Activated CD4-positive, alpha-beta memory T cell treated with anti-CD3 and anti-CD28 coated beads for 36 hours (primary cell): ENCODE measurements at regions of chr1 and their contacts with region 1.

Region 1: DNA sequence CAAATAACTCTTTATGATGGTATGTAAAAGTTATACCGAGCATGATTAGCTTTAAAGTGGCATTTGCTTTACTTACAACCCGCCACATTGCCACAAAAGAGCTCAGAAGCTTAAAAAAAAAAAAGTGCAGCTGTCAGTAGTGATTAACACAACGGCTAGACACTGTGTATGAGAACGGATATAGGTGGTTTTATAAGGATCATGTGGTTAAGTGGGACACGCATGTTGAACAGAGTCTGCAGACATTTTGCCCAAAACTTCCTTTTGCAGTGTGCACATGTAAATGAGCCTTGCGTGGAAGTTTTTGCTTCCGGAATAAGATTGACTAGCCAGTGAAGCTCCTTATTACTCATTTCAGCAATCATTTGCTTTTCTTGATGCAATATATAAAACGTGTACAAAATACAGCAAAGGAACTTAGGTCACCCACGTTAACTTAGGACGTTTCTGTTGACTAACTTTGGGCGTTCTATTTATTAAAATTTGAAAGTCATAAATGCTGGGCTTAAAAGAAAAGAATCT is 58.7 kb upstream of the RGS1 start:
- DNase-seq: peak; percentile 71
- H3K4me3 Mint-ChIP-seq: peak overlapping the region; percentile 53
- H3K27ac Mint-ChIP-seq: peak overlapping the region; percentile 82
- H3K4me1 Mint-ChIP-seq: peaks cover 56% of the 10 kb centered on the region
- H3K27me3 Mint-ChIP-seq: no peaks in the 10 kb centered on the region

Region 2: DNA sequence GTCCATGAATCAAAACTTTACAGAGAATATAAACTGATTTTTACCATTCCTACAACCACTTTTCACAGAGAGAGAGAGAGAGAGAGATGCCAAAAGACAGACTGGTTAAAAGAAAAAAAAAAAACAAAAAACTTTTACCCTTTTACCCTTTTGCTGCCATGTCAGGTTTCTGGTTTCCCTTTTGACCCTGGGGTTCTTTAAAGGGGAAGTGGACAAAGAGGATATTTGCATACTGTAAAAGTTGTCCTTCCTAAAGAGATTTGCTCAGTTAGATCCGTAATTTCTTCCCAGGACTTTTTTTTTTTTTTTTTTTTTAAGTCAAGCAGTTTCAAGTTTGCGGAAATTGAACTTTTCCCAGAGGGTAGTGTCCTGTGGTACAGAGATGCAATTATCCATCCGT is 646.3 kb before region 1 on chr1:
- CTCF ChIA-PET with region 1: no interaction called
- POLR2A ChIA-PET with region 1: no interaction called
- intact Hi-C with region 1: no loop called
- DNase-seq: no peak
- H3K4me3 Mint-ChIP-seq: no peak overlapping the region
- H3K27ac Mint-ChIP-seq: no peak overlapping the region
- H3K4me1 Mint-ChIP-seq: no peaks in the 10 kb centered on the region
- H3K27me3 Mint-ChIP-seq: no peaks in the 10 kb centered on the region

Region 3: GRCh38 chr1:192439373-192440025 is 77.3 kb before region 1 on chr1:
- CTCF ChIA-PET with region 1: no interaction called
- POLR2A ChIA-PET with region 1: no interaction called
- intact Hi-C with region 1: no loop called
- DNase-seq: no peak
- H3K4me3 Mint-ChIP-seq: no peak overlapping the region
- H3K27ac Mint-ChIP-seq: no peak overlapping the region
- H3K4me1 Mint-ChIP-seq: no peaks in the 10 kb centered on the region
- H3K27me3 Mint-ChIP-seq: peaks cover 2% of the 10 kb centered on the region

Region 4: DNA sequence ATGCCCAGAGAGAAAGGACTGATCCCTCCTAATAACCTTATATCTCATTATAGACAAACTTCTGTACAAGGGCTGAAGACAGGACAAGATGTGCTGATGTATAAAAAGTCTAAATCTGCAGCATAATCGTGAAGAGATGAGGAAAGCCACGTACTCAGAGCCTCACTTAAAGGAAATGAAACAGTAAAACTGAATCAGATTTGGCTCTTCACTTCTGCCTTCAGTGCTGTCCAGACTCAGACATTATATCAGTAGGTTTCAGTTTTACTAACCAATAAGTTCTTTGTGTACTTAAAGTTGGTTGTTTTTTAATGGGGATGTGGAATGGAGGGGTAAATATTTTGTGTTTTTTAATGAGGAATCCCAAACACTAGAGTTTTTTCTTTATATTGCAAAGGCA is 13.4 kb after region 1 on chr1:
- CTCF ChIA-PET with region 1: no interaction called
- POLR2A ChIA-PET with region 1: no interaction called
- intact Hi-C with region 1: loop called (anchors 1 kb)
- DNase-seq: no peak
- H3K4me3 Mint-ChIP-seq: no peak overlapping the region
- H3K27ac Mint-ChIP-seq: peak overlapping the region; percentile 47
- H3K4me1 Mint-ChIP-seq: peaks cover 27% of the 10 kb centered on the region
- H3K27me3 Mint-ChIP-seq: peaks cover 3% of the 10 kb centered on the region

Region 5: DNA sequence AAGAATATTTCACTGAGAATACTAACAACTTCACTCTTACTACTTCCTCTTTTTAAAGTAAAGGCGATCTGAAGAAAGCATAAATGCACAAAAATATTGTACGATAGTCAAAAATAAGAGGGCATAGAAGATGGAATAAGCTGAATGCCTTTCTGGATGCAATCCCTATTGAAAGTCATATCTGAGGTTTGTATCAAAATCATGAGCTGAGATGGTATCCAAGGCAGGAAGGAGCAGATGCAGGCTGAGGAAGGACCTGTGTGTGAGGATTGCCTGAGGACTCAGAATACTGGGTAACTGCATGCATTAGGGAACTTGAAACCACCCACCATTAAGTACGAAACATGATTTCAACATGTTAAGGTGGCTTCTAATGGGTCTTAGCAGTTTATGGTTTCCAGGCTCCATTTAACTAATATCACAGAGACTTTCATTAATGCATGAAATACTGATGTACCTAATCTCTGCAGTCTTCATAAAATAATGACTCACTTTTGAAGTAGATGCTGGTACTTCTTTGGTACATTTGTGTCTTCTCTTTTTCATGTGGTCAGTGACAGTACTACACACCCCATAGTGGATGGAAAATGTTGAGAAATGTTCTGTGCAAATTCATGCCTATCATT is 29.2 kb after region 1 on chr1:
- CTCF ChIA-PET with region 1: interaction called, 9 read pairs
- POLR2A ChIA-PET with region 1: interaction called, 18 read pairs
- intact Hi-C with region 1: loop called (anchors 1 kb)
- DNase-seq: no peak
- H3K4me3 Mint-ChIP-seq: peak overlapping the region; percentile 30
- H3K27ac Mint-ChIP-seq: peak overlapping the region; percentile 46
- H3K4me1 Mint-ChIP-seq: peaks cover 60% of the 10 kb centered on the region
- H3K27me3 Mint-ChIP-seq: no peaks in the 10 kb centered on the region

Region 6: GRCh38 chr1:192639607-192640368 is 123.0 kb after region 1 on chr1:
- CTCF ChIA-PET with region 1: no interaction called
- POLR2A ChIA-PET with region 1: interaction called, 3 read pairs
- intact Hi-C with region 1: loop called (anchors 1 kb)
- DNase-seq: no peak
- H3K4me3 Mint-ChIP-seq: no peak overlapping the region
- H3K27ac Mint-ChIP-seq: no peak overlapping the region
- H3K4me1 Mint-ChIP-seq: peaks cover 17% of the 10 kb centered on the region
- H3K27me3 Mint-ChIP-seq: peaks cover 5% of the 10 kb centered on the region

Region 7: DNA sequence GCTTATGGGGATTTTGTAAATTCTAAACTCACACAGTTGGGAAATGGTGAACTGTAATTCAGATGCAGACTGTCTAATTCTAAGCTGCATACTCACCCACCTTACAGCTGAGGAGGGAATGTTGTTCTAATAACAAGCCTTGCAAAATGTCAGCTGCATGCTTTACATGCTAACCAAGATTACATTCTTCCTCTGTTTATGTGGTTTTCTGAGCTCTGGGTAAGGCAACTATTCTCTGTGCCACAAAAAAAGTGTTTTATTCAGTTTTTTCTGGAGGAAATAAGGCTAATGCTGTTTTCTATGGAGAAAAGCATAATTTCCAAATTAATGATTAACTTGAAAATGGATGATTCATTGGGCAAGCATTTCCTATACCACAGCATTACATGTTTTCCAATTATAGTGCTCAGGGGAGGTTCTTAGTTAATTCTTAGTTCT is 184.0 kb after region 1 on chr1:
- CTCF ChIA-PET with region 1: no interaction called
- POLR2A ChIA-PET with region 1: no interaction called
- intact Hi-C with region 1: loop called (anchors 2 kb)
- DNase-seq: no peak
- H3K4me3 Mint-ChIP-seq: no peak overlapping the region
- H3K27ac Mint-ChIP-seq: no peak overlapping the region
- H3K4me1 Mint-ChIP-seq: peaks cover 23% of the 10 kb centered on the region
- H3K27me3 Mint-ChIP-seq: no peaks in the 10 kb centered on the region